ENCODE measurements at regions of chr11 and their contacts with region 1.

Region 1: DNA sequence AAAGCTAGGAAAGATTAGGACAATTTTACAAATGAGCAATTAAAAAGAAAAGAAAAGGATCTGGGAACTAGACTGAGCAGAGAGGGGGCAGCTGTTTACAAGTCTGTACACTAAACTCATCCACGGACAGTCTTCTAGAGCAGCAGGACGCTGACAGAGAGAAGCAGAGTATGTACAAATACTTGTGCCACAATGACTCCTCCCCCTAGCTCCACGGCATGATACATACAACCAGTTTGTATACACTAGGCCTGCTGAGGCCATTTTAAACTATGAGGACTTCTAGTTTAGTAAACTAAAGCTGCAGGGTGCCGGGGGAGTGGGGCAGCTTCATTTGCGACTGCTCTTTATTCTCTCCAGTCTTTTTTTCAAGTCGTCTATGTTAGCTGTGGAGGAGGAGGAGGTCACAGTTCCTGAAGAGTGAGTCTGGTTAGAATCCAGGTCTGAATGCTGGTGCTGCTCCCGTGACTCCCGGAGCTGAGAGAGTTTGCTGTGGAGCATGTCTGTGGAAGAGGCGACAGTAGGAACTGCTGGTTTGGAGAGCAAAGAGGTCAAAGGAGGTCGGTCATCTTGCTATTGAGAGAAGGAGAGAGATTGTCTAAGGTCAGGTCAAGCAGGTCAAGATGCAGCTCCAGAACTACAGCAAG is 24.8 kb downstream of the F2 start:
- DNase-seq: no peak
- H3K4me3 ChIP-seq: no peak overlapping the region
- H3K27ac ChIP-seq: no peak overlapping the region
- H3K4me1 ChIP-seq: no peaks in the 10 kb centered on the region
- H3K27me3 ChIP-seq: no peaks in the 10 kb centered on the region
- CTCF ChIP-seq: no peak
- POLR2A ChIP-seq: no peak

Region 2: DNA sequence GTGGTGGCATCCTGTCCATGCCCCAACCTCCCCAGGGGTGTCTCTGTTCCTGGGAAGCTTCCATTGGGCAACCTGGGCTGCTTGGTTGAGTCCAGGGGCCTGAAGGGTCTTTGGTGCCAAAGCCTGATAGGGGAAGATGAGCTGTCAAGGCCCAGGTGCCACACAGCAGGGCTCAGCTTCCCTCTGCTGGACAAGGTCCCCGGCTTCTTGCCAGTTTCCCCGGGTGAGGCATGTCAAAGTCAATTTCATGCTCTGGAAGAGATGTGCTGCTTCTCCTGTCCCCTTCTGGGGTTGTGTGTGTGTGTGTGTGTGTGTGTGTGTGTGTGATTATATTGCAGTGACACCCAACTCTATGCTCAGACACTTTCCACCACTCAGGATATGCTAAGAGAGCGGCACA is 1820.0 kb before region 1 on chr11:
- intact Hi-C with region 1: loop called (anchors 5 kb)
- DNase-seq: no peak
- H3K4me3 ChIP-seq: no peak overlapping the region
- H3K27ac ChIP-seq: no peak overlapping the region
- H3K4me1 ChIP-seq: no peaks in the 10 kb centered on the region
- H3K27me3 ChIP-seq: no peaks in the 10 kb centered on the region
- CTCF ChIP-seq: no peak
- POLR2A ChIP-seq: no peak

Region 3: DNA sequence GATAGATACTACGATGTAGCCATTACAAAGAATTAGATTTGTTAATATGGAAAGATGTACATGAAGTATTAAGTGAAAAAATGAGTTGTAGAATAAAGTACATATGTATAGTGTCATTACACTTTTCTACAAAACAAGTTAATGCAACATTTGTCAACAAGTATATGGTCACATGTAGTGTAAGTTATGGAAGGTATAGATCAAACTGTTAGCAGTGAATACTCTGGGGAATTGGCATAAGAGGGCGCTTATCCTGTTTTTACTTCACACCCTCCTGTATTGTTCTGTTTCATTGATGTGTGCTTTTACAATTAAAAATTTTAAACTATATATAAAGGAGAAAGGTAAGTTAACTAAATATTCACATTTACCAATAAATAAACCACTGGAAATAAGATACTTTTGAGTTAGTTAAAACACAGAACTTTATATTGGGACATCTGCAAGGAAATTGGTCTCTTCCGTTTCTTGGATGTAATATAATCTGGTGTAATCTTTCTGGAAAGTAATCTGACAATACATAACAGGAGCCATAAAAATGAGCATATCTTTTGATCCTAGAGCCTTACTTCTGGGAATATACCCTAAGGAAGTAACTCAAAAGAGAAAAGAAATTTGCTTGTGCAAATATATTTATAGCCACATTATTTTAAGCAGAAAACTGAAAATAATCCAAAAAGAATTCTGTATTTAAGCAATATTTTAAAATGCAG is 227.3 kb after region 1 on chr11:
- intact Hi-C with region 1: no loop called
- DNase-seq: no peak
- H3K4me3 ChIP-seq: no peak overlapping the region
- H3K27ac ChIP-seq: no peak overlapping the region
- H3K4me1 ChIP-seq: no peaks in the 10 kb centered on the region
- H3K27me3 ChIP-seq: no peaks in the 10 kb centered on the region
- CTCF ChIP-seq: no peak
- POLR2A ChIP-seq: no peak

Measured in vagina (tissue), 2 donors.